GM12878 (cell line): ENCODE measurements at regions of chr1 and their contacts with region 1.

Region 1: GRCh38 chr1:41432481-41433280 is 51.8 kb downstream of the EDN2 start:
- DNase-seq: no peak
- ATAC-seq: peak; percentile 99
- H3K4me3 ChIP-seq: no peak overlapping the region
- H3K27ac ChIP-seq: no peak overlapping the region
- H3K4me1 ChIP-seq: no peaks in the 10 kb centered on the region
- H3K27me3 ChIP-seq: peaks cover 3 to 7% of the 10 kb centered on the region in 2 experiments; a peak in 3 of 4 replicates
- CTCF ChIP-seq: peak; percentile 84 to 91 (median 85)
- EP300 ChIP-seq: no peak
- POLR2A ChIP-seq: no peak
- RAD21 ChIP-seq: peak; percentile 63

Region 2: DNA sequence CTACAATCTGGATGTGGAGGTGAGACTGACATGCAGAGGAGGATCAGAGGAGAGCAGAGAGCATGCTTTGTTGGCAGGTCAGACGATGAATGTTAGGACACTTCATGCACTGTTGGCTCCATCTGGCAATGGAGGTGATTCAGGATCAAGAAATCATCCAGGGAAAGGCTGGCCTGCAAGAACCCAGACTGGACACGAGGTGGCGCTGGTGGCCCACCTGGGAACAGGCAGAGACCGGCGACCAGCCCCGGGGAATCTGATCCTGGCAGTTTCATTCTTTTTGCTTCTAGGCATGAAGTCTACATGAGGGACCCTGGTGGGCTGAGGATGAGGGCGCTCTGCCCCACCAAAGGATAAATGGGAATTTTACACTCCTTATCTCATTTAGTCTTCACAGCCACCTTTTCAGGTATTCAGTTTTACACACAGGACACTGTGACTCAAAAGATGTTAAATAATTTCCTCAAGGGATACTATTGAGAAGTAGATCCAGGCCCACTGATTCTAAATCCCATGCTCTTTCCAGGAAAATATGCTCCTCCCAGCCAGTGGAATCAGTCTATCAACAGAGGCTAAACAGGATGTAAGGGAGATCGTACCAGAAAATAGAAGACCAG is 164.4 kb before region 1 on chr1:
- CTCF ChIA-PET with region 1: interaction called, 23 read pairs
- POLR2A ChIA-PET with region 1: no interaction called
- RAD21 ChIA-PET with region 1: interaction called, 7 read pairs
- SMC1A ChIA-PET with region 1: interaction called, 5 read pairs
- in situ Hi-C with region 1: loop called (anchors 5 kb)
- intact Hi-C with region 1: loop called (anchors 2 kb)
- DNase-seq: no peak
- ATAC-seq: peak; percentile 80
- H3K4me3 ChIP-seq: no peak overlapping the region
- H3K27ac ChIP-seq: no peak overlapping the region
- H3K4me1 ChIP-seq: no peaks in the 10 kb centered on the region
- H3K27me3 ChIP-seq: no peaks in the 10 kb centered on the region
- CTCF ChIP-seq: peak; percentile 94 to 96 (median 96); a peak in 5 of 6 replicates
- EP300 ChIP-seq: no peak
- POLR2A ChIP-seq: no peak
- RAD21 ChIP-seq: peak; percentile 91

Region 3: DNA sequence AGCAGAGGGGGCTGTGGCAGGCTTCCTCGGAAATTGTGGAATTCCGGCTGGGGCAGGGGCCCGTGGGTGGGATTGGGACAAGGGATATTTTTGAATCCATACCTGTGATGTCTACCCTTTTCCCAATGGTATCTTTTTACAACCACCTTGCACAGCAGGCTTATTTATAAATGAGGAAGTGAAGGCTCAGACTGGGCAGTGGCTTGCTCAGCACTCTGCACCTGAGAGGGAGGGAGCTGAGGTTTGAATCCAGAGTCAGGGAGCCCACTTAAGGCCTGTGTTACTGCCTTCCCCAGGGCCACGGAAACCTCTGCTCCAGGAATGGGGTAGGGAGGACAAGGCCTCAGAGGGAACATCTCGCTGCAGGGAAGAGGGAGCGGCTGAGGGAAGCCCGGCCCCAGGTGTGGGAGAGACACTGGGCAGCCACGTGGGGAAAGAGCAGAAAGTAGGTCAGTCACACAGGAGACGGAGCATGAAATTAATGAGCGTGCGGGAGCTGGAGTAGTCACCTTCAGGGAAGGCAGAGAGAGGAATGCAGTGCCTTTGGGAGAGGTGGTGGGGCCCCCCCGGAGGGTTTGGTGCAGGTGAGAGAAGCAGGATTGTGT is 155.2 kb before region 1 on chr1:
- CTCF ChIA-PET with region 1: interaction called, 30 read pairs
- POLR2A ChIA-PET with region 1: interaction called, 3 read pairs
- RAD21 ChIA-PET with region 1: interaction called, 10 read pairs
- SMC1A ChIA-PET with region 1: interaction called, 11 read pairs
- in situ Hi-C with region 1: no loop called
- intact Hi-C with region 1: loop called (anchors 5 kb)
- DNase-seq: no peak
- ATAC-seq: peak; percentile 41; the same call in 1 of the 3 replicates
- H3K4me3 ChIP-seq: no peak overlapping the region
- H3K27ac ChIP-seq: no peak overlapping the region
- H3K4me1 ChIP-seq: no peaks in the 10 kb centered on the region
- H3K27me3 ChIP-seq: peaks cover 2% of the 10 kb centered on the region in 2 experiments; a peak in 2 of 4 replicates
- CTCF ChIP-seq: no peak
- EP300 ChIP-seq: no peak
- POLR2A ChIP-seq: no peak
- RAD21 ChIP-seq: no peak

Region 4: GRCh38 chr1:41282679-41283317 is 149.9 kb before region 1 on chr1:
- CTCF ChIA-PET with region 1: interaction called, 30 read pairs
- POLR2A ChIA-PET with region 1: interaction called, 3 read pairs
- RAD21 ChIA-PET with region 1: interaction called, 10 read pairs
- SMC1A ChIA-PET with region 1: interaction called, 11 read pairs
- in situ Hi-C with region 1: no loop called
- intact Hi-C with region 1: loop called (anchors 5 kb)
- DNase-seq: no peak
- ATAC-seq: peak; percentile 88
- H3K4me3 ChIP-seq: no peak overlapping the region
- H3K27ac ChIP-seq: no peak overlapping the region
- H3K4me1 ChIP-seq: no peaks in the 10 kb centered on the region
- H3K27me3 ChIP-seq: peaks cover 2 to 4% of the 10 kb centered on the region in 2 experiments; a peak in 1 of 4 replicates
- CTCF ChIP-seq: peak; percentile 79 to 94 (median 88)
- EP300 ChIP-seq: no peak
- POLR2A ChIP-seq: no peak
- RAD21 ChIP-seq: peak; percentile 72

Region 5: GRCh38 chr1:41313661-41314131 is 119.0 kb before region 1 on chr1:
- CTCF ChIA-PET with region 1: interaction called, 22 read pairs
- POLR2A ChIA-PET with region 1: no interaction called
- RAD21 ChIA-PET with region 1: interaction called, 3 read pairs
- SMC1A ChIA-PET with region 1: interaction called, 6 read pairs
- in situ Hi-C with region 1: no loop called
- intact Hi-C with region 1: no loop called
- DNase-seq: no peak
- ATAC-seq: peak; percentile 78
- H3K4me3 ChIP-seq: no peak overlapping the region
- H3K27ac ChIP-seq: no peak overlapping the region
- H3K4me1 ChIP-seq: no peaks in the 10 kb centered on the region
- H3K27me3 ChIP-seq: no peaks in the 10 kb centered on the region; a peak in 2 of 4 replicates
- CTCF ChIP-seq: peak; percentile 46 to 71 (median 62)
- EP300 ChIP-seq: no peak
- POLR2A ChIP-seq: no peak
- RAD21 ChIP-seq: peak; percentile 36; the same call in 1 of the 2 replicates

Region 6: GRCh38 chr1:41322835-41323627 is 109.7 kb before region 1 on chr1:
- CTCF ChIA-PET with region 1: interaction called, 29 read pairs
- POLR2A ChIA-PET with region 1: no interaction called
- RAD21 ChIA-PET with region 1: interaction called, 18 read pairs
- SMC1A ChIA-PET with region 1: interaction called, 14 read pairs
- in situ Hi-C with region 1: no loop called
- intact Hi-C with region 1: no loop called
- DNase-seq: no peak
- ATAC-seq: peak; percentile 99
- H3K4me3 ChIP-seq: no peak overlapping the region
- H3K27ac ChIP-seq: no peak overlapping the region
- H3K4me1 ChIP-seq: peaks cover 4% of the 10 kb centered on the region
- H3K27me3 ChIP-seq: no peaks in the 10 kb centered on the region
- CTCF ChIP-seq: peak; percentile 71 to 92 (median 78)
- EP300 ChIP-seq: no peak
- POLR2A ChIP-seq: no peak
- RAD21 ChIP-seq: peak; percentile 74